Thyroid gland (tissue), 4 donors: ENCODE measurements at regions of chr16 and their contacts with region 1.

Region 1: GRCh38 chr16:58684354-58685083 is at the start of gene SLC38A7:
- DNase-seq: peak; percentile 86 to 88
- H3K4me3 ChIP-seq: peak within 1 kb of the TSS; percentile 54 to 82 (median 72)
- H3K27ac ChIP-seq: peak within 1 kb of the TSS; percentile 42 to 86 (median 76)
- H3K4me1 ChIP-seq: peaks cover 9 to 15% of the 10 kb centered on the region in 2 donors
- H3K27me3 ChIP-seq: no peaks in the 10 kb centered on the region
- CTCF ChIP-seq: no peak
- POLR2A ChIP-seq: peak in 1 of 2 donors; percentile 27
- total RNA-seq, gene SLC38A7: 17.2 to 33.8 (median 30.1) TPM

Region 2: DNA sequence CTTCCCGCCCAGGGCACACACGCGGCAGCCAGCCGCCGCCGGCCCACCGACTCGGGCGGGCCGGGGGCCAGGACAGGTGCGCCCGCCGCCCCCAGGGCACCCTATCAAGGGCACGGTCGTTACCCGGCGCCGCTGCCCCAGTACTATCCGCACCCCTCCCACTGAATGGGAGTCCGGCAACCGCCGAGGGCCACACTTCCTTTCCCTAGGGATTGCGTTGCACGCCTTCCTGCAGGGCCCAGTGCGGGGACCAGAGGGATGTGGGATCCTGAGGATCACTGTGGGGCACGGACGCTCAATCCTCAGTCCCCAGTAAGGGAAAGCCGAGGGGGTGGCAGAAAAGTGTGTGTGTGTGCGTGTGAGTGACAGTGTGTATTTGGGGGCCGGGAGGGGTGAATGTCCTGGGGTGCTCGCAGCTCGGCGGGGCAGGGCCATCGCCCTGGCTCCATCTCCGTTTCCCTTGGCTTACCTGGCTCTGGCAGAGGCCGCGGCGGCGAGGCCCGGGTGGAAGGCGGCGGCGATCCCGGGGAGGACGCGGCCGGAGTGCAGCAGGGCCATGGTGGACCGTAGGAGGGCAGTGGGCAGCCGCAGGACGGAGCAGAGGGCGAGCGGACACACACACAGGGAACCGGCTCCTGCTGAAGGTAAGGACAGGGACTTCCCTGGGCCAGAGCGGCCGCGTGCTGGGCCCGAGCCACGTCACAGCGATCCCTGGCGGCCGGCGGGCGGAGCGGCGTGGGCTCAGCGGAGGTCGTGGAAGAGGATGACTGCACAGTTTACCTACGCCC is 49.3 kb after region 1 on chr16 and contains the start of gene GOT2:
- intact Hi-C with region 1: loop called (anchors 5 kb)
- DNase-seq: peak; percentile 81 to 88
- H3K4me3 ChIP-seq: peak within 1 kb of the TSS; percentile 51 to 88 (median 84)
- H3K27ac ChIP-seq: peak within 1 kb of the TSS in 2 of 3 donors; percentile 55 to 78
- H3K4me1 ChIP-seq: peaks cover 12 to 13% of the 10 kb centered on the region in 2 donors
- H3K27me3 ChIP-seq: no peaks in the 10 kb centered on the region
- CTCF ChIP-seq: peak; percentile 42 to 96 (median 76)
- POLR2A ChIP-seq: peak in 1 of 2 donors; percentile 69
- total RNA-seq, gene GOT2: 65.4 to 129 (median 93.4) TPM

Region 3: GRCh38 chr16:59330019-59330670 is 645.6 kb after region 1 on chr16:
- intact Hi-C with region 1: no loop called
- DNase-seq: no peak
- H3K4me3 ChIP-seq: no peak overlapping the region
- H3K27ac ChIP-seq: no peak overlapping the region
- H3K4me1 ChIP-seq: peaks cover 0 to 4% of the 10 kb centered on the region in 2 donors
- H3K27me3 ChIP-seq: no peaks in the 10 kb centered on the region
- CTCF ChIP-seq: no peak
- POLR2A ChIP-seq: no peak